GM12878 (cell line): ENCODE measurements at regions of chr14 and their contacts with region 1.

Region 1: DNA sequence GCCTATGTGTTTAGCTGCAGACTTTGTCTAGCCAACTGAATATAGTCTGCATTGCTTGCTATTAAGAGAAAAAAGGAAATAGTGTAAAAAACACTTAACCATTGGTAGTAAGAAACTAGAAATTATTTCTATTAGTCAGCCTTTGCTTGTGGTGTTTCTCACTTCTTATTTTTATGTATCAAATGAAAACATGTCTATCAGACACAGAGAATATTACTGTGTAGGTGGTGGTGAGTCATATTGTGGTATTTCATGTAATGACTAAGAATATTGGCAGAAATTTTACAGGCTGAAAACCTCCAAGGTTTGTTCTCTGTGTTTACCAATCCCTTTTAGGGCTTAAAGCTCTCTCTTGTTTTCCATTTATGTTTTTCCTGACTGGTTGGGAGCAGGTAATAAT is 87.2 kb downstream of the DAAM1 start:
- DNase-seq: peak; percentile 78
- ATAC-seq: peak; percentile 87
- H3K4me3 ChIP-seq: no peak overlapping the region
- H3K27ac ChIP-seq: peak overlapping the region; percentile 40; the same call in 1 of the 2 replicates
- H3K4me1 ChIP-seq: peaks cover 21% of the 10 kb centered on the region
- H3K27me3 ChIP-seq: no peaks in the 10 kb centered on the region
- CTCF ChIP-seq: no peak
- EP300 ChIP-seq: peak; percentile 88 to 96
- POLR2A ChIP-seq: no peak
- RAD21 ChIP-seq: no peak

Region 2: GRCh38 chr14:59132796-59133494 is 142.7 kb before region 1 on chr14:
- CTCF ChIA-PET with region 1: interaction called, 8 read pairs
- POLR2A ChIA-PET with region 1: interaction called, 3 read pairs
- RAD21 ChIA-PET with region 1: interaction called, 11 read pairs
- SMC1A ChIA-PET with region 1: interaction called, 10 read pairs
- in situ Hi-C with region 1: no loop called
- intact Hi-C with region 1: no loop called
- DNase-seq: no peak
- ATAC-seq: no peak
- H3K4me3 ChIP-seq: no peak overlapping the region
- H3K27ac ChIP-seq: no peak overlapping the region
- H3K4me1 ChIP-seq: no peaks in the 10 kb centered on the region
- H3K27me3 ChIP-seq: no peaks in the 10 kb centered on the region
- CTCF ChIP-seq: peak in 1 of 3 experiments; percentile 14; a peak in 1 of 6 replicates
- EP300 ChIP-seq: no peak
- POLR2A ChIP-seq: no peak
- RAD21 ChIP-seq: no peak

Region 3: GRCh38 chr14:59208224-59208814 is 67.3 kb before region 1 on chr14:
- CTCF ChIA-PET with region 1: interaction called, 3 read pairs
- POLR2A ChIA-PET with region 1: no interaction called
- RAD21 ChIA-PET with region 1: interaction called, 23 read pairs
- SMC1A ChIA-PET with region 1: interaction called, 20 read pairs
- in situ Hi-C with region 1: no loop called
- intact Hi-C with region 1: no loop called
- DNase-seq: peak; percentile 65
- ATAC-seq: peak; percentile 84
- H3K4me3 ChIP-seq: no peak overlapping the region
- H3K27ac ChIP-seq: peak overlapping the region; percentile 62; the same call in 1 of the 2 replicates
- H3K4me1 ChIP-seq: peaks cover 8% of the 10 kb centered on the region; the same call in 1 of the 2 replicates
- H3K27me3 ChIP-seq: no peaks in the 10 kb centered on the region
- CTCF ChIP-seq: no peak
- EP300 ChIP-seq: no peak
- POLR2A ChIP-seq: no peak
- RAD21 ChIP-seq: no peak

Region 4: DNA sequence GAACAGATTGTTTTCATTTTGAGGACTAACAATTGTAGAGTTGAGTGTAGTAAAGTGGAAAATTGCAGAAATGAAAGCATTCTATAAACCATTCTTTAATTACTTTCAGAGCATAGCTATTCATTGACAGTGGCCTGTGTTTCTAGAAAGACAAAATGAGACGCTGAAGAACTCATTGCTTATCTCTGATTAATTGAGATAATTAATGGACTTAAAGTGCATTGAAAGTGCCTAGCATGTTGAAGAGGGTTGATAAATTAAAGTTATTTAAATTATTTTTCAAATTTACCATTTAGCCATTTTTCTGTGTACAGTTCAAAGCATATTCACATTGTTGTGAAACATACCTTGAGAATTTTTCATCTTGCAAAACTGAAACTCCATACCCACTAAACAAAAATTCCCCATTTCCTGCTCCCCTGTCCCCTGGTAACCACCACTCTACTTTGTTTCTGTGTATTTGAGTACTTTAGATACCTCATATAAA is 29.8 kb before region 1 on chr14:
- CTCF ChIA-PET with region 1: interaction called, 6 read pairs
- POLR2A ChIA-PET with region 1: interaction called, 8 read pairs
- RAD21 ChIA-PET with region 1: interaction called, 40 read pairs
- SMC1A ChIA-PET with region 1: interaction called, 81 read pairs
- in situ Hi-C with region 1: no loop called
- intact Hi-C with region 1: loop called (anchors 1 kb)
- DNase-seq: peak; percentile 69
- ATAC-seq: peak; percentile 87
- H3K4me3 ChIP-seq: no peak overlapping the region
- H3K27ac ChIP-seq: peak overlapping the region; percentile 65
- H3K4me1 ChIP-seq: peaks cover 17% of the 10 kb centered on the region
- H3K27me3 ChIP-seq: no peaks in the 10 kb centered on the region
- CTCF ChIP-seq: no peak
- EP300 ChIP-seq: peak; percentile 58 to 64
- POLR2A ChIP-seq: no peak
- RAD21 ChIP-seq: no peak

Region 5: GRCh38 chr14:59262717-59263454 is 12.8 kb before region 1 on chr14:
- CTCF ChIA-PET with region 1: interaction called, 10 read pairs
- POLR2A ChIA-PET with region 1: interaction called, 5 read pairs
- RAD21 ChIA-PET with region 1: interaction called, 13 read pairs
- SMC1A ChIA-PET with region 1: interaction called, 14 read pairs
- in situ Hi-C with region 1: no loop called
- intact Hi-C with region 1: no loop called
- DNase-seq: no peak
- ATAC-seq: peak; percentile 52; the same call in 2 of the 3 replicates
- H3K4me3 ChIP-seq: no peak overlapping the region
- H3K27ac ChIP-seq: no peak overlapping the region
- H3K4me1 ChIP-seq: no peaks in the 10 kb centered on the region
- H3K27me3 ChIP-seq: no peaks in the 10 kb centered on the region
- CTCF ChIP-seq: 0 out of 6 replicates have a peak, but pooled peaks of 1 of the 3 experiments have one; percentile 22
- EP300 ChIP-seq: no peak
- POLR2A ChIP-seq: no peak
- RAD21 ChIP-seq: no peak

Region 6: DNA sequence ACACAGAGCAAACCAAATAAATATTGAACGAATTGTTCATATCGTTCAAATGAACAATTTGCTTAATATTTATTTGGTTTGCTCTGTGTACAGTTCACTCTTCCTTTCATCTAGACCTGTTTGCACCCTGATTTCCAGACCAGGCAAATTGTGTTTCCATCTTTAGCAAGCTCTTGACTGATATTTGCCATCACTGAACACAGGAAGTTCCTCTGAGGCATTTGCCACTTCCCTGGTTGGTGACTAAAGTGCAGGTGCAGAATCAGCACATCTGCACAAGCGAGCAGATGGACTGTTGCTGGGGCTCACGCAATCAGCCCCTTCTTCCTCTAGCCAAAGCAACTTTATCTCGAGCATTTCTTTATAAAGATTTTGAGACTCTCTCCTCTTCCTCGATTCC is 25.7 kb after region 1 on chr14:
- CTCF ChIA-PET with region 1: no interaction called
- POLR2A ChIA-PET with region 1: interaction called, 6 read pairs
- RAD21 ChIA-PET with region 1: interaction called, 11 read pairs
- SMC1A ChIA-PET with region 1: interaction called, 26 read pairs
- in situ Hi-C with region 1: no loop called
- intact Hi-C with region 1: no loop called
- DNase-seq: peak; percentile 53
- ATAC-seq: peak; percentile 79
- H3K4me3 ChIP-seq: no peak overlapping the region
- H3K27ac ChIP-seq: no peak overlapping the region
- H3K4me1 ChIP-seq: peaks cover 6% of the 10 kb centered on the region; the same call in 1 of the 2 replicates
- H3K27me3 ChIP-seq: no peaks in the 10 kb centered on the region
- CTCF ChIP-seq: no peak
- EP300 ChIP-seq: no peak
- POLR2A ChIP-seq: no peak
- RAD21 ChIP-seq: no peak

Region 7: DNA sequence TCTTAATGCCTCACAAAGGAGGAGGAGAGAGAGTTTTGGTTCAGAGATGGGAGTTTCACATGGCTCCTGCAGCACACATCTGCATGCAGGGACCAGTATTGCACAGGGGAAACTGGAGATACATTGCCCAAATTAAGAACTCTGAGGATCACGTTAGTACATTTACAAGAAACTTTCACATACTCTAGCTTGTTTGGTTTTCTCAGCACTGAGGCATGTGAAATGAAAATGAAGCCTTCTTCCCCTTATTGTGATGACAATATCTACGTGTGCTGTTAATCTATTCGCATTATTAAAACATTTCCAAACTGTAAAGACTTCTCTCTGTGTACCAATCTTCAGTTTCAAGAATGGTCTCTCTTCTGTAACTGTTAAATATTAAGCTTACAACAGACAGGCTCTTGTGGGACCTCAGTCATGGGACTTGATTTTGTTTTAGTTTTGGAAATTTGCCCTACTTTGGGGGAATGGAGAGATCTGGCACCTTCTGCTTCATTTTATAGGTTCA is 37.5 kb after region 1 on chr14:
- CTCF ChIA-PET with region 1: interaction called, 3 read pairs
- POLR2A ChIA-PET with region 1: interaction called, 4 read pairs
- RAD21 ChIA-PET with region 1: interaction called, 18 read pairs
- SMC1A ChIA-PET with region 1: interaction called, 17 read pairs
- in situ Hi-C with region 1: no loop called
- intact Hi-C with region 1: no loop called
- DNase-seq: peak; percentile 60
- ATAC-seq: peak; percentile 80
- H3K4me3 ChIP-seq: no peak overlapping the region
- H3K27ac ChIP-seq: peak overlapping the region; percentile 14; the same call in 1 of the 2 replicates
- H3K4me1 ChIP-seq: peaks cover 3% of the 10 kb centered on the region; the same call in 1 of the 2 replicates
- H3K27me3 ChIP-seq: no peaks in the 10 kb centered on the region
- CTCF ChIP-seq: no peak
- EP300 ChIP-seq: no peak
- POLR2A ChIP-seq: no peak
- RAD21 ChIP-seq: no peak